Activated T-helper 2 cell treated with anti-CD3 and anti-CD28 coated beads, Interferon-gamma antibody, Interleukin-2, Interleukin-4, amounts not matched to agents 10 μg/mL and 5 μg/mL and 100 μg/mL, durations not matched to agents 14 hours and 24 hours and 36 hours (primary cell): ENCODE measurements at regions of chr16 and their contacts with region 1.

Region 1: GRCh38 chr16:23877107-23878090 is 41.6 kb downstream of the PRKCB start:
- DNase-seq: no peak
- H3K4me3 Mint-ChIP-seq: no peak overlapping the region
- H3K27ac Mint-ChIP-seq: no peak overlapping the region
- H3K4me1 Mint-ChIP-seq: peaks cover 62% of the 10 kb centered on the region
- H3K27me3 Mint-ChIP-seq: no peaks in the 10 kb centered on the region

Region 2: GRCh38 chr16:23826528-23827045 is 50.8 kb before region 1 on chr16:
- intact Hi-C with region 1: loop called (anchors 2 kb)
- DNase-seq: no peak
- H3K4me3 Mint-ChIP-seq: peak overlapping the region; percentile 10
- H3K27ac Mint-ChIP-seq: peak overlapping the region; percentile 13
- H3K4me1 Mint-ChIP-seq: peaks cover 40% of the 10 kb centered on the region
- H3K27me3 Mint-ChIP-seq: no peaks in the 10 kb centered on the region

Region 3: GRCh38 chr16:23847948-23848347 is 29.5 kb before region 1 on chr16:
- intact Hi-C with region 1: loop called (anchors 5 kb)
- DNase-seq: peak; percentile 34
- H3K4me3 Mint-ChIP-seq: no peak overlapping the region
- H3K27ac Mint-ChIP-seq: peak overlapping the region; percentile 79
- H3K4me1 Mint-ChIP-seq: peaks cover 79% of the 10 kb centered on the region
- H3K27me3 Mint-ChIP-seq: no peaks in the 10 kb centered on the region

Region 4: GRCh38 chr16:23952128-23952970 is 75.0 kb after region 1 on chr16:
- intact Hi-C with region 1: loop called (anchors 2 kb)
- DNase-seq: no peak
- H3K4me3 Mint-ChIP-seq: no peak overlapping the region
- H3K27ac Mint-ChIP-seq: peak overlapping the region; percentile 43
- H3K4me1 Mint-ChIP-seq: peaks cover 64% of the 10 kb centered on the region
- H3K27me3 Mint-ChIP-seq: no peaks in the 10 kb centered on the region

Region 5: DNA sequence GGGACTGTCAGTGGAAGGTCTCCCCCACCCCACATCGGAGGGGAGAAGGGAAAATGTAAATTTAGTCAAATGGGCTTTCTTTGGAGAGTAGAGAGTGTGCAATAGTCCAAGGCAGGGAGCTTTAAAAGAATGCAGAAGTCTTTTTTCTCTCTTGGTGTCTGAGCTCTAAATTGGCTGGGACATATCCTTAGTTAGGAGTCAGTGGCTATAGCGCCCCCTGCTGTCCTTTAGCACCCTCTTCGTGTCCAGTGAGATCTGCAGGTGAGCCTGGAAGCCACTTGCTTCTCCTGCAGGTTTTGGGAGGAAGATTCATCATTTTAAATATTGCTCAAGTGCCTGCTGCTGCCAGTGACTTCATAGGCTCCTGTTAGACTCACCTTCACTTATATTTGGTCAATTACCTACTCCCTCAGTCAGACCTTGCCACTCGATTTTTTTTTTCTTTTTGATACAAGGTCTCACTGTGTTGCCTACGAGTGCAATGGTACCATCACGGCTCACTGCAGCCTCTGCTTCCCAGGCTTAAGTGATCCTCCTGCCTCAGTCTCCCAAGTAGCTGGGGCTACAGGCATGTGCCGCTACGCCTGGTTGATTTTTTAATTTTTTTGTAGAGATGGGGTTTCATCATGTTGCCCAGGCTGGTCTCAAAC is 133.2 kb after region 1 on chr16:
- intact Hi-C with region 1: loop called (anchors 5 kb)
- DNase-seq: peak; percentile 61
- H3K4me3 Mint-ChIP-seq: no peak overlapping the region
- H3K27ac Mint-ChIP-seq: no peak overlapping the region
- H3K4me1 Mint-ChIP-seq: peaks cover 27% of the 10 kb centered on the region
- H3K27me3 Mint-ChIP-seq: no peaks in the 10 kb centered on the region